HCT116 (cell line): ENCODE measurements at regions of chr2 and their contacts with region 1.

Region 1: GRCh38 chr2:219206442-219207253 is at the start of gene ZFAND2B:
- DNase-seq: peak; percentile 78
- ATAC-seq: peak; percentile 97
- H3K4me3 ChIP-seq: peak within 1 kb of the TSS; percentile 67
- H3K27ac ChIP-seq: peak within 1 kb of the TSS; percentile 68
- H3K4me1 ChIP-seq: peaks cover 11 to 17% of the 10 kb centered on the region in 2 experiments
- H3K27me3 ChIP-seq: no peaks in the 10 kb centered on the region
- CTCF ChIP-seq: no peak; a peak in 1 of 6 replicates
- POLR2A ChIP-seq: peak; percentile 94
- RAD21 ChIP-seq: no peak
- total RNA-seq, gene ZFAND2B: 31.4 TPM

Region 2: DNA sequence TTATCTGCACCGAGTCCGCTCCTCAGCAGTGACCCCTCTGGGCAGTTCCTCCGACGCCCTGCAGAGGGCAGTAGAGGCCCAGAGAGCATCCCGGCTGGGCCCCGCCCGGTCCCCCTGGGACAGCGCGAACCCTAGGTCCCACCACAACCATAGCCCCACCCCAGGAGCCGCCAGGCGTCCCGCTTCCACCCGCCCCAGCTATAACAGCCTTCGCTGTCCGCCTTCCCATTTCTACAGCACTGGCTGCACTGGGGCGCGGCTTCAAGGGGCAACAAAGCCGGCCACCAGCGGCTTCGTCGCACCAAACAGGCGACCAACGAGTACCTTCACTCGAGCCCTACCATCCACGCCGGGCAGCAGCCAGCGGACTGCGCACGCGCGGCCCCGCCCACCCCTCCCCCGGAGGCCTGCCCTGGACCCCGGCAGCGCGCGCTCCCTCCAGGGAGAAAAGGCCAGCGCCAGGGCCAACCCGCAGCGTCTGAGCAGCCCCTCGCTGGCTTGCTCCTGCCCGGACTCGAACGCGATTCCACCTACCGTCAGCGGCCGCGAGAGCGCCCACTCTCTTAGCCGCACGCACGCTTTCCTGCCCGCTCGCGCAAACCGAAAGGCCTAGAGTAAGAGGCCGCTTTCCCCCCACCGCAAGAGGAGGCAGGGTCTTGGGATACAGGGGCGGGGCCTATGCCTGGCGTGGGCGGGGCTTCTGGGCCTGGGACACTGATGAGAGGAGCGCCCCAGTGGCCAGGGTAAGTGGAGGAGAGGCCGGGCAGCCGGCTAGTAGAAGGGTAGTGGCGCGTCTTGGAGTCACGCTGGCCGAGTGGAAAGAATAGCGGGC is 46.2 kb before region 1 on chr2 and contains the start of gene NHEJ1:
- CTCF ChIA-PET with region 1: interaction called, 3 read pairs
- POLR2A ChIA-PET with region 1: no interaction called
- RAD21 ChIA-PET with region 1: no interaction called
- intact Hi-C with region 1: loop called (anchors 2 kb)
- DNase-seq: peak; percentile 88
- ATAC-seq: peak; percentile 94
- H3K4me3 ChIP-seq: peak within 1 kb of the TSS; percentile 67 to 69
- H3K27ac ChIP-seq: peak within 1 kb of the TSS; percentile 82
- H3K4me1 ChIP-seq: peaks cover 5 to 16% of the 10 kb centered on the region in 2 experiments; a peak in 3 of 4 replicates
- H3K27me3 ChIP-seq: no peaks in the 10 kb centered on the region
- CTCF ChIP-seq: peak; percentile 94 to 99 (median 95)
- POLR2A ChIP-seq: peak; percentile 86
- RAD21 ChIP-seq: peak; percentile 95
- total RNA-seq, gene NHEJ1: 16.4 TPM

Region 3: GRCh38 chr2:219171231-219171651 is 35.4 kb before region 1 on chr2:
- CTCF ChIA-PET with region 1: interaction called, 10 read pairs
- POLR2A ChIA-PET with region 1: interaction called, 5 read pairs
- RAD21 ChIA-PET with region 1: no interaction called
- intact Hi-C with region 1: loop called (anchors 2 kb)
- DNase-seq: peak; percentile 18
- ATAC-seq: peak; percentile 81
- H3K4me3 ChIP-seq: no peak overlapping the region
- H3K27ac ChIP-seq: no peak overlapping the region
- H3K4me1 ChIP-seq: peaks cover 5 to 8% of the 10 kb centered on the region in 2 experiments
- H3K27me3 ChIP-seq: no peaks in the 10 kb centered on the region
- CTCF ChIP-seq: peak in 2 of 3 experiments; percentile 73 to 80; a peak in 4 of 6 replicates
- POLR2A ChIP-seq: no peak
- RAD21 ChIP-seq: no peak

Region 4: GRCh38 chr2:219177552-219178376 is 28.9 kb before region 1 on chr2 and contains the start of gene RETREG2:
- CTCF ChIA-PET with region 1: interaction called, 5 read pairs
- POLR2A ChIA-PET with region 1: interaction called, 5 read pairs
- RAD21 ChIA-PET with region 1: no interaction called
- intact Hi-C with region 1: loop called (anchors 2 kb)
- DNase-seq: peak; percentile 84
- ATAC-seq: peak; percentile 68
- H3K4me3 ChIP-seq: peak within 1 kb of the TSS; percentile 87 to 93
- H3K27ac ChIP-seq: peak within 1 kb of the TSS; percentile 97
- H3K4me1 ChIP-seq: peaks cover 10 to 27% of the 10 kb centered on the region in 2 experiments
- H3K27me3 ChIP-seq: no peaks in the 10 kb centered on the region
- CTCF ChIP-seq: peak in 1 of 3 experiments; percentile 28; a peak in 1 of 6 replicates
- POLR2A ChIP-seq: peak; percentile 85
- RAD21 ChIP-seq: no peak
- total RNA-seq, gene RETREG2: 63.7 TPM

Region 5: DNA sequence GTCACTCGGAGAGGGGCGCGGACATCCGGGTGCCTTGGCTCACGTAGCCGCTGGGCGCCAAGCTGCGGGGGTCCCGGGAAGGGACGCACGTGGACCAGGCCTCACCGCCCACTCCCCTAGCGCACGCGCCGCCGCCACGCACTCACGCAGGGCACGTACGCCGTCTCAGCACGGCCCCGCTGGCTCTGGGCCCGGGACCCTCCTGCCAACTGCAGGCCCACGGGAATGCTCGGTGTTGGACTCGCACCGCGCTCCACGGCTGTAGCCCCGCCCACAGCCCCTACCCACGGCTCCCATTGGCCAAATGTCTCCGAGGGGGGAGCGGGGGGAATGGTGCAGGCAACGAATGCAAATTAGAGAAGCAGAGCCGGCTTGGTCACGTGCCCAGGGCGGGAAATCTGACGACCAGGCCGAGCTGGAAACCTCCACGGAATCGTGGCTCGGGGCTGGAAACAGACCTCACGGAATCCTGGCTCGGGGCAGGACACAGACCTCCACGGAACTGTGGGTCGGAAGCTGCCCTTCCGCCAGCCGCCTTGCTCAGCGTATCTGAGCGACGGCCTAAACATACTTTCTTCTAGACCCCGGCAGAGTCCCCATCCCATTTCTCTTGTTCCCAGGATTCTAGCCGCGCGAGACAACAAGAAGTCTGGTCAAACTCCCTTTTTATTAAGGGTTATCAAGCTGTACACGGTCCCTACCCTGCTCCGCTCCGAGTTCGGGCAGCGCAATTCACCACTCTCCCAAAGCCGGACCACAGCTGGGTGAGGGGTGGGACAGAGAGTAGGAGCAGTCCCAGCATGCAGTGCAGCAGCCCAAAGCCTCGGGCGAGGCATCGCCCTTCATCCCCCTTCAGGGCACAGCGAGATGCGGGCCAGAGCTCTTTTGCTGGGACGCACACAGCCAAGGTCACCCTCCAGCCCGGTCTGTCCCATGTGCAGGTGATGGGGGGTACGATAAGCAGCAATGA is 12.4 kb after region 1 on chr2 and contains the start of gene ABCB6:
- CTCF ChIA-PET with region 1: interaction called, 4 read pairs
- POLR2A ChIA-PET with region 1: interaction called, 18 read pairs
- RAD21 ChIA-PET with region 1: interaction called in 1 of 2 experiments, 9 read pairs
- intact Hi-C with region 1: no loop called
- DNase-seq: peak; percentile 70
- ATAC-seq: peak; percentile 80
- H3K4me3 ChIP-seq: peak within 1 kb of the TSS; percentile 56 to 70
- H3K27ac ChIP-seq: peak within 1 kb of the TSS; percentile 81
- H3K4me1 ChIP-seq: peaks cover 9 to 37% of the 10 kb centered on the region in 2 experiments; a peak in 3 of 4 replicates
- H3K27me3 ChIP-seq: no peaks in the 10 kb centered on the region
- CTCF ChIP-seq: no peak
- POLR2A ChIP-seq: no peak
- RAD21 ChIP-seq: no peak
- total RNA-seq, gene ABCB6: 24.5 TPM

Region 6: GRCh38 chr2:219344751-219345430 is 138.2 kb after region 1 on chr2:
- CTCF ChIA-PET with region 1: no interaction called
- POLR2A ChIA-PET with region 1: no interaction called
- RAD21 ChIA-PET with region 1: no interaction called
- intact Hi-C with region 1: no loop called
- DNase-seq: no peak
- ATAC-seq: no peak
- H3K4me3 ChIP-seq: no peak overlapping the region
- H3K27ac ChIP-seq: no peak overlapping the region
- H3K4me1 ChIP-seq: no peaks in the 10 kb centered on the region
- H3K27me3 ChIP-seq: peaks cover 2% of the 10 kb centered on the region; the same call in 1 of the 2 replicates
- CTCF ChIP-seq: no peak
- POLR2A ChIP-seq: no peak
- RAD21 ChIP-seq: no peak